Activated T-helper 1 cell treated with anti-CD3 and anti-CD28 coated beads, Interleukin-12 subunit alpha, Interleukin-12 subunit beta, Interleukin-2, Interleukin-4 antibody, amounts not matched to agents 30 ng/mL and 10 ng/mL and 1 ng/mL, durations not matched to agents 14 hours and 24 hours and 36 hours (primary cell): ENCODE measurements at regions of chr2 and their contacts with region 1.

Region 1: GRCh38 chr2:70124983-70125480 is 37.8 kb downstream of the PCBP1 start:
- DNase-seq: peak; percentile 42
- H3K4me3 Mint-ChIP-seq: peak overlapping the region; percentile 93
- H3K27ac Mint-ChIP-seq: peak overlapping the region; percentile 99
- H3K4me1 Mint-ChIP-seq: peaks cover 78% of the 10 kb centered on the region
- H3K27me3 Mint-ChIP-seq: no peaks in the 10 kb centered on the region

Region 2: GRCh38 chr2:69755862-69756467 is 369.1 kb before region 1 on chr2:
- intact Hi-C with region 1: no loop called
- DNase-seq: no peak
- H3K4me3 Mint-ChIP-seq: no peak overlapping the region
- H3K27ac Mint-ChIP-seq: no peak overlapping the region
- H3K4me1 Mint-ChIP-seq: peaks cover 19% of the 10 kb centered on the region
- H3K27me3 Mint-ChIP-seq: no peaks in the 10 kb centered on the region

Region 3: GRCh38 chr2:70104231-70105111 is 20.6 kb before region 1 on chr2:
- intact Hi-C with region 1: loop called (anchors 1 kb)
- DNase-seq: no peak
- H3K4me3 Mint-ChIP-seq: peak overlapping the region; percentile 79
- H3K27ac Mint-ChIP-seq: peak overlapping the region; percentile 87
- H3K4me1 Mint-ChIP-seq: peaks cover 42% of the 10 kb centered on the region
- H3K27me3 Mint-ChIP-seq: no peaks in the 10 kb centered on the region